ENCODE measurements at regions of chr1 and their contacts with region 1.

Region 1: DNA sequence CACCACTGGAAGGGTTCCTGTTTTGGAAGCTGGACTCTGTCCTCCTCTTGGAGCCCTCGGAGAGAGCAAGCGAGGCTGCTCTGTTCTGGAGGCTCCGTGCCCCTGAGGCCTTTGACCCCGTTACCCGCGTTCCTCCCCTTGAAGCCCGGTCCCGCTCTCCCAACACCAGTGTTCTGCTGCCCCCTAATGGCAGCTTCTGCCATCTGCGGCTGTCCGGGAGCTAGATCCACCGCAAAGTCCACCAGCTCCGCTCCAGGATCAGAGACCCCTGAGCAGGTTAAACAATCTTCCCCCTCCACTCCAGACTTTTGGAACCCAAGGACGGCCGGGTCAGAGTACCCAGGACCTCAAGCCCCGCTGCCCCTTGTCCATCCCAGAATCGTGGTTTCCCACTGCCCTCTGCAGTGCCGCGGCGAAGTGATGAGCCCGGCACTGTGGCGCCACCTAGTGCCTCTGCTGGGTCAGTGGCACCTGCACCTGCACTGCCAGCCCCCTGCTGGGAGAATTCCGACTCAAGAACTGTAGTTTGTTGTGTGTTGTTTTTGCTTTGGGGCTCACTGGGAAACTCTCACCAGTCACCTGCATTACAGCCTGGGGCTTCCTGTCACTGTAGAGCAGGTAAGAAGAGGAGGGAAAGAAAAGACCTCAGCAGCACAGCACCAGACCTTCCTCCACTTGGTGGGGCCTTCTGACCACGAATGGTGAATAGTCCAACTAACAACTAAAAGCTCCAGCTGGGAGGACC is 63.5 kb upstream of the NFASC start:
- DNase-seq: peak; percentile 64 to 97
- H3K4me3 ChIP-seq: peak overlapping the region; percentile 19 to 85 (median 70); a peak in 7 of 8 replicates
- H3K27ac ChIP-seq: no peak overlapping the region
- H3K4me1 ChIP-seq: peaks cover 0 to 4% (median 0%) of the 10 kb centered on the region in 4 experiments; a peak in 2 of 7 replicates
- H3K27me3 ChIP-seq: no peaks in the 10 kb centered on the region
- CTCF ChIP-seq: peak; percentile 73 to 99 (median 92)
- EP300 ChIP-seq: peak in 1 of 2 experiments; percentile 49; a peak in 1 of 3 replicates
- POLR2A ChIP-seq: no peak
- RAD21 ChIP-seq: peak; percentile 84 to 88

Region 2: DNA sequence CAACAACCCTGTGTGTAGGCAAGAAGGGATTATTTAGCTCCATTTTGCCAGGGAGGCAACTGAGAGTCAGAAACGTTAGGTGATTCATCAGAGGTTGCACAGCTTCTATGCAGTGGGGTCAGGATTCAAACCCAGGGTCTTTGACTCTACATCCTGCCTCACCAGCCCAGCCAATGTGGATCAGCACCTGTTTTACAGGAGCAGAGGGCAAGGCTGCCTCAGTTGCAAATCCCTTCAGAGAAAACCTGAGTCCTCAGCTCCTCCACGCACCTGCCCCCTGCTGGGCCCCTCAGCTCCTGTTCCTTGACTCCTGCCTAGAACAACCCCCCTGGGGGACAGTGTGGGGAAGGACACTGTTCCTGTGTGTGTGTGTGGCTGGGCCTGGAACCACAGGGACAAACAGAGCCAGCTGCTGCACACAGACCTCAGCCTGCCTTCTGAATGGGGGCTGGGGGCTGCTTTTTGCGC is 183.2 kb before region 1 on chr1:
- CTCF ChIA-PET with region 1: interaction called, 125 read pairs
- POLR2A ChIA-PET with region 1: no interaction called
- DNase-seq: no peak
- H3K4me3 ChIP-seq: no peak overlapping the region
- H3K27ac ChIP-seq: no peak overlapping the region
- H3K4me1 ChIP-seq: peaks cover 3 to 11% (median 6%) of the 10 kb centered on the region in 4 experiments; a peak in 6 of 7 replicates
- H3K27me3 ChIP-seq: no peaks in the 10 kb centered on the region
- CTCF ChIP-seq: peak; percentile 40 to 81 (median 44)
- EP300 ChIP-seq: no peak
- POLR2A ChIP-seq: no peak
- RAD21 ChIP-seq: peak; percentile 31 to 48; a peak in 3 of 4 replicates

Region 3: DNA sequence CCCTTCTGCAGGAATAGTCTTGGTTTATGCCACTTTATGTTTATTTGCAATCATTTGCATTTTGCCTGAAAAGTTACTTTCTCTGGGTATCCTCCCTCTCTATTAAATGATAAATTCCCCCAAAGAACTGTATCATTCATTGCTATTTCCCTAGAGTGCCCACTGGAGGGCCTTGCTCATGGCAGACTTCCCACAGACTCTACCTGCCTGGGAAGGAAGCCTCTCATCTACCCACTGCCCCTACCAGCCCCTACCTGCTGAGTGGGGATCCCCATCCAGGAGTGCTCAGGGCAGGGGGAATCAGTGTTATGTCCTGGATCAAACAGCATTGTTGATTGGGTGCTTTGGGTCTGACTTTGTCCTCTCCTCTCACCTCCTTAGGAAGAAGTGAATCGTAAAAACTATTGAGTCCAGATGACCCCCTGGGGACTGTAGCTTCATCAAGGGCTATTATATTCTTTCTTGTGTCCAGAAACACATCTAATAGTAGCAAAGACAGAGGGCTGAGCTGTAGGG is 114.7 kb before region 1 on chr1:
- CTCF ChIA-PET with region 1: interaction called, 44 read pairs
- POLR2A ChIA-PET with region 1: interaction called, 4 read pairs
- DNase-seq: peak in 1 of 2 experiments; percentile 53
- H3K4me3 ChIP-seq: peak overlapping the region in 1 of 4 experiments; percentile 12; a peak in 1 of 8 replicates
- H3K27ac ChIP-seq: no peak overlapping the region
- H3K4me1 ChIP-seq: peaks cover 1 to 4% (median 2%) of the 10 kb centered on the region in 4 experiments; a peak in 5 of 7 replicates
- H3K27me3 ChIP-seq: peaks cover 0 to 5% (median 5%) of the 10 kb centered on the region in 4 experiments; a peak in 3 of 7 replicates
- CTCF ChIP-seq: peak; percentile 5 to 30 (median 23)
- EP300 ChIP-seq: no peak
- POLR2A ChIP-seq: no peak
- RAD21 ChIP-seq: peak; percentile 41 to 54; a peak in 3 of 4 replicates

Region 4: DNA sequence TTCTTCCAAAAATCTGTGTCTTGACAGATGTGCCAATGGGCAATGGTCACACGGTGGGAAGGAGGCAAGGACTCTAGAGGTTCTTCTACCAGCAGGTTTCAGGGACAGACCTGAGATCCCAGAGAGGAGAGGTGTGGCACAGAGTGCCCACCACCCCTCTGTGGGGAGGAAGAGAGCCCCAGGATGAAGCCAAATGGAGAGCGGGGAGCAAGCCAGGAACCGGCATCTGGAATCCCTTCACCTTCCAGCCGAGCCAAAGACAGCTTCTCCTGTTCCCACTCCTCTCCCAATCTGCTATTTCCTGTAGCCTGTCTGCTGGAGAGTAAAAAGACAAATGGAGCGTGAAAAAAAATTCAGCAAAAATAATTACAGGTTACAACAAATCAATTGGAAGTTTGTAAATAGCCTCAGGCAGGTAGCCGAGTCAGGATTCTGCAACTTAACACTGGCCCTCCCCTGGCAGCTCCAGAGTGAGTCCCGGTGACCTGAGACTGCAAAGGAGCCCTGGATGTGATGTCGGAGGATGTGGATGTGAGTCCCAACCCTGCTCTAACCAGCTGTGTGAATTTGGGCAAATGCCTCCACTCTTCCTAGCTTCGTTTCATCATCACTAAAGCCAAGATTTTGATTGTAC is 76.2 kb before region 1 on chr1:
- CTCF ChIA-PET with region 1: interaction called, 12 read pairs
- POLR2A ChIA-PET with region 1: no interaction called
- DNase-seq: peak in 1 of 2 experiments; percentile 41
- H3K4me3 ChIP-seq: no peak overlapping the region
- H3K27ac ChIP-seq: no peak overlapping the region
- H3K4me1 ChIP-seq: peaks cover 0 to 6% (median 2%) of the 10 kb centered on the region in 4 experiments; a peak in 3 of 7 replicates
- H3K27me3 ChIP-seq: no peaks in the 10 kb centered on the region; a peak in 1 of 7 replicates
- CTCF ChIP-seq: no peak
- EP300 ChIP-seq: no peak
- POLR2A ChIP-seq: no peak
- RAD21 ChIP-seq: no peak

Region 5: DNA sequence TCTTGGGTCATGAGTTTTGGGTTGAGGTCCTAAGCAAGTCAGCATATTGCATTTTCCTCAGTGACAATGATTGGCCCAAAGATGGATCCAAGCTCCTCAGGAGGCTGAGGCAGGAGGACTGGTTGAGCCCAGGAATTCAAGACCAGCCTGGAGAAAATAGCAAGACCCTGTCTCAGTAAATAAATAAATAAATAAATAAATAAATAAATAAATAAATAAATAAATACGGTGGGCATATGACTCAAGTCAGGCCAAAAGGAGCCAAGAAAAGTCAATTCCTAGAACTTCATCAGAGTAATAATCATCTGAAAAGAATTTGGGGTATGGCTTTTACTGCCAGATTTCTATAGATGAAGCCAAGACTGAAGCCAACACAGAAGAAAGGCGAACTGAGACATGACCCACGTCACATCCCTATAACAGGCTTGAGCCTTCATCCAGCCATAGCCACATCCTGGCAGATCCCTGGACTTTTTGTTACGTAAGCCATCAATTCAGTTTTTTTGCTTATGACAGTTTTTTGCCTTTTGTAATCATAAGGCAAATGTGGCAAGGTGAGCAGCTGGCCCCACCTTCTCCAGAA is 24.9 kb before region 1 on chr1:
- CTCF ChIA-PET with region 1: interaction called, 231 read pairs
- POLR2A ChIA-PET with region 1: no interaction called
- DNase-seq: no peak
- H3K4me3 ChIP-seq: no peak overlapping the region
- H3K27ac ChIP-seq: no peak overlapping the region
- H3K4me1 ChIP-seq: no peaks in the 10 kb centered on the region
- H3K27me3 ChIP-seq: no peaks in the 10 kb centered on the region
- CTCF ChIP-seq: no peak
- EP300 ChIP-seq: no peak
- POLR2A ChIP-seq: no peak
- RAD21 ChIP-seq: no peak

Region 6: GRCh38 chr1:204935155-204935554 is 128.0 kb after region 1 on chr1:
- CTCF ChIA-PET with region 1: interaction called, 122 read pairs
- POLR2A ChIA-PET with region 1: no interaction called
- DNase-seq: no peak
- H3K4me3 ChIP-seq: no peak overlapping the region
- H3K27ac ChIP-seq: no peak overlapping the region
- H3K4me1 ChIP-seq: peaks cover 0 to 4% (median 0%) of the 10 kb centered on the region in 4 experiments; a peak in 2 of 7 replicates
- H3K27me3 ChIP-seq: no peaks in the 10 kb centered on the region; a peak in 1 of 7 replicates
- CTCF ChIP-seq: no peak
- EP300 ChIP-seq: no peak
- POLR2A ChIP-seq: no peak
- RAD21 ChIP-seq: no peak

Region 7: DNA sequence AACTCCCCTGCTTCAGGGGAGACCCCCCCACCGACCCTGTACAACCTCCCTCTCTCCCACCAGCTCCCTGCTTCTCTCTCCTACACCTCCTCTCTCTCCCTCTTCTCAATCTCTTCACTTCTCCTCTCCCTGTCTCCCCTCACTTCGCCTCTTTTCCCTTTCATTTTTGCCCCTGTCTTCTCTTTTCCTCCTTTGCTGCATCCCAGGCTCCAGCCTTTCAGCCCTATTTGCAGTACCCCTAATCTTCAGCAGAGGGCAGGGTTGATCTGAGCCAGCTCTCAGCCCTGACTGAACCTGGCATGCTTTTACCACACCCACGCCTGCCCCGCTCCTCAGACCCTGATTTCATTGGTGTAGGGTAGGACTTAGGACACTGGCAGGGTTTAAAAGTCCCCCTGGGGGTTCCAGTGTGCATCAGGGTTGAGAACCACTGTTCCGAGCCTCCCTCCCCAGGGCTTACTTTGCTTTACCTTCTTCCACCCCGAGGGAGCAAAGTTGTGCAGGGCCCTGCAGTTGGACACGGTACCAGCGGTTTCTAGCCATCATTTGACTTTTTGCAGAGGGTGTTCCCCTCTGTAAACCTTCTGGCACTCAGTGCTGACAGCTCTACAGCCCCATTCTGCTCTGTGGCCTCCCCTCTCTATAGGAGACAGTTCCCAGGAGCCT is 168.6 kb after region 1 on chr1:
- CTCF ChIA-PET with region 1: interaction called, 41 read pairs
- POLR2A ChIA-PET with region 1: no interaction called
- DNase-seq: peak; percentile 23 to 88
- H3K4me3 ChIP-seq: no peak overlapping the region
- H3K27ac ChIP-seq: no peak overlapping the region
- H3K4me1 ChIP-seq: no peaks in the 10 kb centered on the region
- H3K27me3 ChIP-seq: no peaks in the 10 kb centered on the region
- CTCF ChIP-seq: peak; percentile 77 to 82 (median 80)
- EP300 ChIP-seq: no peak
- POLR2A ChIP-seq: no peak
- RAD21 ChIP-seq: peak; percentile 84 to 86